ENCODE measurements at regions of chr7 and their contacts with region 1.

Region 1: DNA sequence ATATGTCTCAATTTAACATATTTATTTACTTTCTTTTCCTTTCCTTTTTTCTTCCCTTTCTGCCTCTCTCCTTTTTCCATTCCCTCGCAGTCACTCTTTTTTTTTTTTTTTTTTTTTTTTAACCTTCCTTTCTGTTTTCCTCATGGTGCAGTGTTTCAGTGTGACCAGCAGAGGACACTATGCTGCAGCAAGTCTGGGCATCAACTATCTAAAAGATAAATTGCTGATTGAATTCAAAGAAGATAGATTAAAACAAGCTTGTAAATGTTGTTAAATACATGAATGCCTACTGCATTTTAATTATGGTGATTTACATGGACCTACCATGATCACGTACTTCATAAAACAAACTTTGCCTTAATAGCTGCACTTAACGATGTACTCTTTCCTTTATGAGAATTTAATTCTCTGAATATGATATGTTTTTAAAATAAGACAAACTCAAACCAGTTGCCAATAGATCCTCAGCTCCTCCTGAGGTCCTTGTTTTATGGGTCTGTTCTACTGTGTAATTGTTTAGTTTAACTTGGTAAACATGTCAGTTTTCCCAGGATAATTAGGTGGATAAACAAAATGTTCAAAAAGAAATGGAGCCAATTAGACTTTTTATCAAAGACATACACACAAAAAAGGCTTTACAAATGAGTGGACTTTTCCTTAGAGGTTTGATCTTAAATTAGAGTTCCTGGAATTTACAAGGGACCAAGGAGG is 101.0 kb upstream of the AGR3 start:
- DNase-seq: peak in 1 of 10 donors; percentile 23
- H3K4me3 ChIP-seq: peak overlapping the region in 7 of 59 donors; percentile 1 to 25 (median 6)
- H3K27ac ChIP-seq: peak overlapping the region in 29 of 59 donors; percentile 1 to 80 (median 42)
- H3K27me3 ChIP-seq: peaks cover 0 to 6% (median 0%) of the 10 kb centered on the region in 45 donors
- CTCF ChIP-seq: peak; percentile 79 to 99 (median 93)

Region 2: GRCh38 chr7:17044858-17045257 is 62.1 kb after region 1 on chr7:
- intact Hi-C with region 1: loop called in 1 of 2 experiments (anchors 5 kb)
- DNase-seq: no peak
- H3K4me3 ChIP-seq: no peak overlapping the region
- H3K27ac ChIP-seq: no peak overlapping the region
- H3K27me3 ChIP-seq: no peaks in the 10 kb centered on the region
- CTCF ChIP-seq: no peak

Region 3: GRCh38 chr7:17298207-17298839 is 315.5 kb after region 1 on chr7 and contains the start of gene AHR:
- intact Hi-C with region 1: loop called (anchors 2 kb)
- DNase-seq: peak; percentile 90 to 98 (median 94)
- H3K4me3 ChIP-seq: peak within 1 kb of the TSS; percentile 58 to 99 (median 89)
- H3K27ac ChIP-seq: peak within 1 kb of the TSS; percentile 76 to 98 (median 94)
- H3K27me3 ChIP-seq: no peaks in the 10 kb centered on the region
- CTCF ChIP-seq: peak in 2 of 56 donors; percentile 5 to 14
- total RNA-seq, gene AHR: 7.8 to 51.4 (median 18.7) TPM

Region 4: DNA sequence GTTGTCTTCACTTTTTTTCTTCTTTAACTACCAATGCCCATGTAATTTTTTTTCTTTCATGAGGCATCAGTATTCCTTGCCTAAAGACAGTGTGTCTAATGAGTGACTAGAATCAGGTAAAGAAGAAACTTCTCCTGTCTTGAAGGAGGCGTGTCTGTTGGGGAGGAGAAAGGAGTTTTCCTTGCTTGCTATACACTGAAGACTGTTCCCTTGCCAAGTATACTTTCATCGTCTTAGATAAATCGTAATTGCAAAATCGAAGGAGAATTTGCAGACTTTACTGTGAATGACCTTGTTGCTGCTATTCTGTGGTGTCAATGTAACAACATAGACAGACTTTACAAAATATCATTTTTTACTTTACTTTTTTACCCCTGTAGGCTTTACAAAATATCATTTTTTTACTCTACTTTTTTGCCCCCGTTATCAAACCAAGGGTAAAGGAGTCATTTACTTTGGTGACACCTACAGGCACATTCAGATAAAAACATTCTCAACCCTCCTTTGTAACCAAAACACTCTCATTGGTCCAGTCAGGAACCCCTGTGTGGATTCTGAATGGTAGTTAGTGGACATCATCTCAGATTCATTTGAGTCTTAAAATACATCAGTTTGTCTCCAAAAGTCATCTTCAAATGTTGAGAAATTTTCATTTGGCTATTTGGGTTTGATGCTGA is 548.1 kb after region 1 on chr7:
- intact Hi-C with region 1: loop called in 1 of 2 experiments (anchors 10 kb)
- DNase-seq: no peak
- H3K4me3 ChIP-seq: no peak overlapping the region
- H3K27ac ChIP-seq: no peak overlapping the region
- H3K27me3 ChIP-seq: peaks cover 0 to 6% (median 0%) of the 10 kb centered on the region in 45 donors
- CTCF ChIP-seq: peak in 44 of 56 donors; percentile 13 to 58 (median 36)

Measured in dorsolateral prefrontal cortex (tissue), 120 donors.